B cell (primary cell): ENCODE measurements at regions of chr7 and their contacts with region 1.

Region 1: DNA sequence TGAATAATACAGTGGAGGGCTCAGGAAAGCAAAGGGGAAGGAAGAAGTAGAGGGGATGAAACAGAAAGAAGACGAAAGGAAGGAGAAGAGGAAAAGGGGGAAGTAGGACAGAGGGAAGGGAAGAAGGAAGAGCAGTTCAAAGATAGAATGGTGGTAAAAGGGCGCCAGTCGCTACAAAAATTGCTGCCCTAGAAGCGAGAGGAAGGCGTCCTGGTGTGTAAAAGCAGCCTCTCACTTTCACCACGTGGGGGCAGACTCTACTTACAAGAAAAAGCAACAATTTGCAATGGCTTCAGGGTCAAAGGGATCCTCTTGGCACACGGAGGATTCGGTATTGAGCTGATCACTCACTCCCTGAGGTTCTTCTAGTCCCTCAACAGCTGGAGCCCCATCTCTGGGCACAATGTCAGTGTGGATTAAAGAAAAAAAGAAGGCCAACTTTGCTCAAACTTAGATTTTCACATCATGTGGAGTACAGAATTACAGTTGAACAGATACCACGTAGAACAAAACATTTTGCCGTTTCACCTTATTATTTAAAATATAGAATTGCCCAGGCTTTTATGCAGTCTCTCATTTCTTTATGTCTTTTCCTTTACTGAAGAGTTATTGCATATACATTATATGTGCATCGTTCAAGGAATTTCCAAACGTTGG is 31.4 kb upstream of the NPVF start:
- DNase-seq: peak; percentile 73
- ATAC-seq: peak; percentile 63
- H3K4me3 ChIP-seq: no peak overlapping the region
- H3K4me3 Mint-ChIP-seq: no peak overlapping the region
- H3K27ac ChIP-seq: no peak overlapping the region
- H3K27ac Mint-ChIP-seq: no peak overlapping the region
- H3K4me1 ChIP-seq: peaks cover 7 to 13% of the 10 kb centered on the region in 2 donors
- H3K4me1 Mint-ChIP-seq: peaks cover 10% of the 10 kb centered on the region
- H3K27me3 ChIP-seq: peaks cover 0 to 25% (median 21%) of the 10 kb centered on the region in 4 experiments
- H3K27me3 Mint-ChIP-seq: peaks cover 58% of the 10 kb centered on the region
- CTCF ChIP-seq: peak; percentile 76

Region 2: GRCh38 chr7:25389489-25390106 is 129.9 kb after region 1 on chr7:
- CTCF ChIA-PET with region 1: interaction called, 8 read pairs
- POLR2A ChIA-PET with region 1: no interaction called
- intact Hi-C with region 1: loop called (anchors 1 kb)
- DNase-seq: peak; percentile 9
- ATAC-seq: no peak
- H3K4me3 ChIP-seq: no peak overlapping the region
- H3K4me3 Mint-ChIP-seq: no peak overlapping the region
- H3K27ac ChIP-seq: no peak overlapping the region
- H3K27ac Mint-ChIP-seq: no peak overlapping the region
- H3K4me1 ChIP-seq: no peaks in the 10 kb centered on the region
- H3K4me1 Mint-ChIP-seq: no peaks in the 10 kb centered on the region
- H3K27me3 ChIP-seq: peaks cover 0 to 9% (median 2%) of the 10 kb centered on the region in 4 experiments
- H3K27me3 Mint-ChIP-seq: peaks cover 21% of the 10 kb centered on the region
- CTCF ChIP-seq: no peak

Region 3: GRCh38 chr7:25520017-25520416 is 260.3 kb after region 1 on chr7:
- CTCF ChIA-PET with region 1: no interaction called
- POLR2A ChIA-PET with region 1: no interaction called
- intact Hi-C with region 1: no loop called
- DNase-seq: no peak
- ATAC-seq: peak; percentile 21
- H3K4me3 ChIP-seq: no peak overlapping the region
- H3K4me3 Mint-ChIP-seq: peak overlapping the region; percentile 14
- H3K27ac ChIP-seq: no peak overlapping the region
- H3K27ac Mint-ChIP-seq: no peak overlapping the region
- H3K4me1 ChIP-seq: peaks cover 21 to 27% of the 10 kb centered on the region in 2 donors
- H3K4me1 Mint-ChIP-seq: peaks cover 26% of the 10 kb centered on the region
- H3K27me3 ChIP-seq: no peaks in the 10 kb centered on the region
- H3K27me3 Mint-ChIP-seq: peaks cover 17% of the 10 kb centered on the region
- CTCF ChIP-seq: no peak

Region 4: GRCh38 chr7:26187380-26188205 is 927.9 kb after region 1 on chr7:
- CTCF ChIA-PET with region 1: interaction called, 10 read pairs
- POLR2A ChIA-PET with region 1: no interaction called
- intact Hi-C with region 1: no loop called
- DNase-seq: peak; percentile 45
- ATAC-seq: no peak
- H3K4me3 ChIP-seq: no peak overlapping the region
- H3K4me3 Mint-ChIP-seq: no peak overlapping the region
- H3K27ac ChIP-seq: peak overlapping the region in 1 of 2 donors; percentile 20
- H3K27ac Mint-ChIP-seq: peak overlapping the region; percentile 61
- H3K4me1 ChIP-seq: peaks cover 14 to 15% of the 10 kb centered on the region in 2 donors
- H3K4me1 Mint-ChIP-seq: peaks cover 83% of the 10 kb centered on the region
- H3K27me3 ChIP-seq: no peaks in the 10 kb centered on the region
- H3K27me3 Mint-ChIP-seq: no peaks in the 10 kb centered on the region
- CTCF ChIP-seq: no peak